Panc1 (cell line): ENCODE measurements at regions of chr13 and their contacts with region 1.

Region 1: GRCh38 chr13:29850224-29850898 is at the start of gene UBL3:
- DNase-seq: no peak
- ATAC-seq: peak; percentile 91
- H3K4me3 ChIP-seq: peak within 1 kb of the TSS; percentile 87 to 88
- H3K27ac ChIP-seq: peak within 1 kb of the TSS; percentile 83
- H3K4me1 ChIP-seq: peaks cover 11% of the 10 kb centered on the region; the same call in 1 of the 2 replicates
- H3K27me3 ChIP-seq: no peaks in the 10 kb centered on the region
- CTCF ChIP-seq: no peak
- total RNA-seq, gene UBL3: 11.1 TPM

Region 2: DNA sequence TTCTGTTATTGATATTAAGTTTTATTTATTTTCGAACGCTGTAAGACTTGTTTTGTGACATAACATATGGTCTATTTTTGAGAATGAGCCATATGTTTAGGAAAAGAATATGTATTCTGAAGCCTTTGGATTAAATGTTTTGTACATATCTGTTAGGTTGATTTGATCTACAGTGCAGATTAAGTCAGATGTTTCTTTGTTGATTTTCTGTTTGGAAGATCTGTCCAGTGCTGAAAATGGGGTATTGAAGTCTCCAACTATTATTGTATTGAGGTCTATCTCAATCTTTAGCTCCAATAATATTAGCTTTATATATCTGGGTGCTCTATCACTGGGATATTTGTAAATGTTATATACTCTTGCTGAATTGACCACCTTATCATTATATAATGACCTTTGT is 932.3 kb before region 1 on chr13:
- CTCF ChIA-PET with region 1: no interaction called
- POLR2A ChIA-PET with region 1: interaction called, 17 read pairs
- in situ Hi-C with region 1: no loop called
- intact Hi-C with region 1: no loop called
- DNase-seq: no peak
- ATAC-seq: no peak
- H3K4me3 ChIP-seq: no peak overlapping the region
- H3K27ac ChIP-seq: no peak overlapping the region
- H3K4me1 ChIP-seq: no peaks in the 10 kb centered on the region
- H3K27me3 ChIP-seq: no peaks in the 10 kb centered on the region
- CTCF ChIP-seq: no peak

Region 3: GRCh38 chr13:29817604-29818378 is 32.6 kb before region 1 on chr13:
- CTCF ChIA-PET with region 1: no interaction called
- POLR2A ChIA-PET with region 1: no interaction called
- in situ Hi-C with region 1: no loop called
- intact Hi-C with region 1: no loop called
- DNase-seq: no peak
- ATAC-seq: no peak
- H3K4me3 ChIP-seq: no peak overlapping the region
- H3K27ac ChIP-seq: no peak overlapping the region
- H3K4me1 ChIP-seq: peaks cover 3% of the 10 kb centered on the region
- H3K27me3 ChIP-seq: no peaks in the 10 kb centered on the region
- CTCF ChIP-seq: no peak

Region 4: GRCh38 chr13:29830000-29830399 is 20.4 kb before region 1 on chr13:
- CTCF ChIA-PET with region 1: no interaction called
- POLR2A ChIA-PET with region 1: interaction called, 13 read pairs
- in situ Hi-C with region 1: no loop called
- intact Hi-C with region 1: no loop called
- DNase-seq: no peak
- ATAC-seq: no peak
- H3K4me3 ChIP-seq: no peak overlapping the region
- H3K27ac ChIP-seq: no peak overlapping the region
- H3K4me1 ChIP-seq: no peaks in the 10 kb centered on the region
- H3K27me3 ChIP-seq: no peaks in the 10 kb centered on the region
- CTCF ChIP-seq: no peak

Region 5: DNA sequence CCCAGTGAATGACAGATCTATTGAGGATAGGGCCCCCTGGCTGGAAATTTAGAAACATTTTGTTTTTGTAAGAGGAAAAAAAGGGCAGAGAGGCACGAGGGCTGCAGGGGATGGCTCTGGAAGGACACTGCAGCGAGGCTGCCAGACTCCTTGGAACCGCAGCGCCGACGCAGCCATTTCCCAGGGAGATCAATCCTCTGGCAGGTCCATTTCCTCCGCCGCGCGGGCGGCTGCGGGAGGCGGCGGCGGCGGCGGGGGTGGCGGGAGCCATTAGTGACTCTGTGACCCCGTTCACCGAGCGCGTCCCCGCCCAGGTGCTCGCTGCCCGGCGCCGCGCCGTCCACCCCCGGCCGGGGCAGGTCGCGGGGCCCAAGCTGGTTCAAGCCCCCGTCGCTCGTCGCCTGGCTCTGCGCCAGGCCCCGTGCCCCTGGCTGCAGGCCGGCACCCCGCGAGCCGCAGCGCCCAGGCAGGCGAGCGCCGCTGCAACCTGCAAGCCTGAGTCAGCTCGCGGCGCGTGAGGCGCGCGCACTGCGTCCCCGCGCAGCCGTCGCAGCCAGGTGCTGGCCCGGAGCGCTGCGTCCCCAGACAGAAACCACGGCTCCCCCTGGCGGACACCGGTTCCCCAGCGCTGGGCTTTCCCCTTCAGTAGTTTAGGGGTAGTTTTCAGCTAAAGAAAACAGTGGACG is 264.4 kb after region 1 on chr13:
- CTCF ChIA-PET with region 1: no interaction called
- POLR2A ChIA-PET with region 1: no interaction called
- in situ Hi-C with region 1: no loop called
- intact Hi-C with region 1: loop called (anchors 2 kb)
- DNase-seq: peak; percentile 17
- ATAC-seq: peak; percentile 94
- H3K4me3 ChIP-seq: peak overlapping the region; percentile 41 to 57
- H3K27ac ChIP-seq: no peak overlapping the region
- H3K4me1 ChIP-seq: peaks cover 3% of the 10 kb centered on the region
- H3K27me3 ChIP-seq: no peaks in the 10 kb centered on the region
- CTCF ChIP-seq: peak; percentile 91

Region 6: DNA sequence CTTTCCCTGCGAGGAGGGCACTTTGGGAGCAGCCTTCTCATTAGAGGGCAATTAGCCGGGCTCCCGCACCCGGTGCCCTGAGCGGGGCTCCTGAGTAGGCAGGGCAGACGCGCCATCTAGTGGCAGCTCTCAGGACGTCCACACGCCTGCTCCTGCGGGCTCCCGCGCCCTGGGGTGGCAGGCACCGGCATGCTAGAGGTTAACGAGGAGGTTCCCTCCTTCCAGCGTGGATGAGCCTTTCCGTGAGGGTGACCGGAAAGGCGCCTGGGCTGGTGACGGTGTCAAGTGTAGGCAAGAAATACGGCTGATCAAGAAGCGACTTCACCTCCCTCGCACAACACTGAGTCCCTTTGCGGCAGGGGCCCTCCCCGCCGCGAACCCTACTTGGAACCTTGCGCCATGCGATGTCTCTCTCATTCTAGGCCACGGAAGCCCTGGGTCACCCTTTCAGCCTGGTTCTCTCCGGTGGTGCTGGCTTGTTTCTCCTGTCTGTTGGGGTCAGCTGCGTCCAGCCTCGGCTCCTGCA is 952.7 kb after region 1 on chr13:
- CTCF ChIA-PET with region 1: no interaction called
- POLR2A ChIA-PET with region 1: interaction called, 10 read pairs
- in situ Hi-C with region 1: no loop called
- intact Hi-C with region 1: no loop called
- DNase-seq: no peak
- ATAC-seq: peak; percentile 92
- H3K4me3 ChIP-seq: no peak overlapping the region
- H3K27ac ChIP-seq: peak overlapping the region; percentile 92
- H3K4me1 ChIP-seq: peaks cover 27% of the 10 kb centered on the region
- H3K27me3 ChIP-seq: no peaks in the 10 kb centered on the region
- CTCF ChIP-seq: peak; percentile 86